Posterior cingulate gyrus (tissue), 11 donors: ENCODE measurements at regions of chr10 and their contacts with region 1.

Region 1: GRCh38 chr10:94320285-94320914 is 42.3 kb downstream of the NOC3L start:
- DNase-seq: peak in 9 of 10 donors; percentile 26 to 92 (median 67)

Region 2: GRCh38 chr10:93916257-93917063 is 403.9 kb before region 1 on chr10:
- intact Hi-C with region 1: loop called (anchors 2 kb)
- DNase-seq: no peak

Region 3: GRCh38 chr10:94076321-94076841 is 244.0 kb before region 1 on chr10:
- intact Hi-C with region 1: loop called (anchors 2 kb)
- DNase-seq: no peak